ENCODE measurements at regions of chr20 and their contacts with region 1.

Region 1: GRCh38 chr20:45771182-45771759 is 20.4 kb downstream of the WFDC3 start:
- DNase-seq: peak; percentile 73 to 79 (median 75)
- H3K4me3 ChIP-seq: no peak overlapping the region
- H3K4me3 Mint-ChIP-seq: peak overlapping the region in 1 of 8 donors; percentile 21
- H3K27ac ChIP-seq: no peak overlapping the region
- H3K27ac Mint-ChIP-seq: peak overlapping the region in 1 of 7 donors; percentile 61
- H3K4me1 ChIP-seq: no peaks in the 10 kb centered on the region
- H3K4me1 Mint-ChIP-seq: peaks cover 1 to 7% (median 4%) of the 10 kb centered on the region in 4 donors
- H3K27me3 ChIP-seq: no peaks in the 10 kb centered on the region
- H3K27me3 Mint-ChIP-seq: peaks cover 10 to 23% of the 10 kb centered on the region in 2 donors

Region 2: DNA sequence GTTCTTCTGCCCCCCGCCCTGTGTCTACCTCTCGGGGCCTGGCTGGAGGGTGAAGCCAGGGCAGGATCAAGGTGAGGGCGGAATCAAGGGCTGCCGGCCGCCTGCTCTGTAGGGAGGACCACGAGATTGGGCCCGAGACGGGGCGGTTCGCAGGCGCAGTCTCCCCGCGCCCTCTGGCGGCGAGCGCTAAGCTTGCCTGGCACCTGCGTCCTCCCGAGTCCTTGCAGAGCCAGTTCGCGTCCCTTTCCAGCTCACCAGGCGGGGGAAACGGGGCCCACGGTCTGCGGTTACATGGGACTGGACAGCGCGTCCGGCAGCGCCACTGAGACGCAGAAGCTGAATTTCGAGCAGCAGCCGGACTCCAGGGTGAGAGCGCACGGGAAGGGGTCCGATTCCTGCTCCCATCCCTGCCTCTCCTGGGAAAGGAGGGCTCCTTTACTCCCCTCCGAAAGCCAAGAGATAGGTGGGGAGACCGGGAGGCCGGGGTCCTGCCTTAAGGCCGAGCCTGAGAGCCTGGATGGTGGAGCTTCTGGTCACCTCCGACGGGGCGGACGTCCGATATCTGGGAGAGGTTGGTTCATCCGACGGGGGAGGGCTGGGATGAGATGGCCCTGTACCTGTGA is 459.6 kb before region 1 on chr20:
- CTCF ChIA-PET with region 1: interaction called, 125 read pairs
- POLR2A ChIA-PET with region 1: no interaction called
- intact Hi-C with region 1: no loop called
- DNase-seq: peak in 4 of 5 donors; percentile 33 to 49 (median 40)
- H3K4me3 ChIP-seq: no peak overlapping the region
- H3K4me3 Mint-ChIP-seq: peak overlapping the region in 1 of 8 donors; percentile 4
- H3K27ac ChIP-seq: no peak overlapping the region
- H3K27ac Mint-ChIP-seq: no peak overlapping the region
- H3K4me1 ChIP-seq: peaks cover 6% of the 10 kb centered on the region
- H3K4me1 Mint-ChIP-seq: peaks cover 4 to 7% (median 6%) of the 10 kb centered on the region in 4 donors
- H3K27me3 ChIP-seq: no peaks in the 10 kb centered on the region
- H3K27me3 Mint-ChIP-seq: peaks cover 21 to 35% of the 10 kb centered on the region in 2 donors

Region 3: DNA sequence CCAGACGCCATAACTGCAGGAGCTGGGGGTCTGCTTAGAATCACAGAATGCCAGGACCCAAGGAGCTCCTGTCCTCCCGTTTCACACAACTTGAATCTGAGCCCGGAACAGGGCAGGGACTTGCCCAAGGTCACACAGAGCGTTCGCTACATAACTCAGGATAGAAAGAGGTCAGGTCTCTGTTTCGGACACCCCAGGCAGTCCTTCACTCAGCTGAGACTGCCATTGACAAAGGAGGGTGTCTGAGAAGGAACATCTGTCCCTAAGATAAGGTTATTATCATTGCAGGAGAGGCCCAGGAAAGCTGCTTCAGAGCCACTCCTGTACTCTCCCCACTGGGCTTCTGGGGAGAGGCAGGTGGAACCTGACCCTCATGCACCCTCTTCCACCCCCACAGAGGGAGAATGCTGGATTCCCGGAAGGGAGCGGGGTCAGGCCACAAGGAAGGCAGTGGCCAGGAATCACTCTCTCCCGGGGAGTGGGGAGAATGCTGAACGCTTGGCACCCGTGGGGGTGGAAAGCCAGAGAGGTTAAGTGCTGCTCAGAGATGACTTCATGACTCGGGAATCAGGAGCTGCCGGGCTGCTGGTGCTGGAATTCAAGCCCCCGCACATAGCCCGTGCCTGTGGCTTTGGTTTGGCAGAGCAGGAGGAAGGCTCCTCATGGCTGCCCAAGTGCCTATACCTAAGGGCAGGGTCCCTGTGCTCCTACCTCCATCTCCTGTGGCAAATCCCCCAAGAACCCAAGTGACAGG is 433.7 kb before region 1 on chr20:
- CTCF ChIA-PET with region 1: interaction called, 11 read pairs
- POLR2A ChIA-PET with region 1: no interaction called
- intact Hi-C with region 1: no loop called
- DNase-seq: no peak
- H3K4me3 ChIP-seq: no peak overlapping the region
- H3K4me3 Mint-ChIP-seq: no peak overlapping the region
- H3K27ac ChIP-seq: no peak overlapping the region
- H3K27ac Mint-ChIP-seq: peak overlapping the region in 1 of 7 donors; percentile 36
- H3K4me1 ChIP-seq: no peaks in the 10 kb centered on the region
- H3K4me1 Mint-ChIP-seq: no peaks in the 10 kb centered on the region
- H3K27me3 ChIP-seq: no peaks in the 10 kb centered on the region
- H3K27me3 Mint-ChIP-seq: no peaks in the 10 kb centered on the region

Region 4: GRCh38 chr20:45456632-45457031 is 314.6 kb before region 1 on chr20:
- CTCF ChIA-PET with region 1: interaction called, 9 read pairs
- POLR2A ChIA-PET with region 1: no interaction called
- intact Hi-C with region 1: loop called (anchors 1 kb)
- DNase-seq: peak in 1 of 5 donors; percentile 19
- H3K4me3 ChIP-seq: no peak overlapping the region
- H3K4me3 Mint-ChIP-seq: no peak overlapping the region
- H3K27ac ChIP-seq: no peak overlapping the region
- H3K27ac Mint-ChIP-seq: peak overlapping the region in 1 of 7 donors; percentile 11
- H3K4me1 ChIP-seq: no peaks in the 10 kb centered on the region
- H3K4me1 Mint-ChIP-seq: no peaks in the 10 kb centered on the region
- H3K27me3 ChIP-seq: no peaks in the 10 kb centered on the region
- H3K27me3 Mint-ChIP-seq: no peaks in the 10 kb centered on the region

Region 5: DNA sequence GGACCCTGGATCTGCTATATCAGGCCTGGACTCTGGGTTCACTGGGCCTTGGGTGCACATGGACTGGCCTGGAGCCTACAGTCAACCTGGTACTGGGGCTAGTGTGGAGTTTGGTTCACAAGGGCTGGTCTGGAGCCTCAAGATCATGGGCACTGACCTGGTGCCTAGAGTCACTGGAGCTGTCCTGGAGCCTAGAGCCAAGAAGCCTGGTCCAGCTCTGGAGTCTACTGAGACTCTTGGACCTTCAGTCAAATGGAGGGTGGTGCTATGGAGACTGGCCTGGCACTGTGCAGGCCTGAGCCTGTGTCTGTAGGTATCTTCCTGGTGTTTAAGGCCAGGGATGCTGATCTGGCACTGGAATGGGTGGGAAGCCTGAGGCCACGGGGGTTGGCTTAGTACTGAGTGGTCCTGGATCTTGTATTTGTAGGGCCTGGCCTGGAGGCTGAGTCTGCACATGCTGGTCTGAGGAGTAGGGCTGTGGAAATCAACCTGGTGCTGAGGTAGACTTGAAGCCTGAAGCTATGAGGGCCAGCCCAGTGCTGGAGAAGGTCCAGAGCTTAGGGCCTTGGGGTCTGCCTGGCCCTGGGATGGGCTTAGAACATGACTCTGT is 123.7 kb before region 1 on chr20:
- CTCF ChIA-PET with region 1: no interaction called
- POLR2A ChIA-PET with region 1: no interaction called
- intact Hi-C with region 1: no loop called
- DNase-seq: no peak
- H3K4me3 ChIP-seq: no peak overlapping the region
- H3K4me3 Mint-ChIP-seq: no peak overlapping the region
- H3K27ac ChIP-seq: no peak overlapping the region
- H3K27ac Mint-ChIP-seq: no peak overlapping the region
- H3K4me1 ChIP-seq: no peaks in the 10 kb centered on the region
- H3K4me1 Mint-ChIP-seq: no peaks in the 10 kb centered on the region
- H3K27me3 ChIP-seq: no peaks in the 10 kb centered on the region
- H3K27me3 Mint-ChIP-seq: peaks cover 1 to 13% of the 10 kb centered on the region in 2 donors

Region 6: GRCh38 chr20:45798935-45799642 is 27.8 kb after region 1 on chr20:
- CTCF ChIA-PET with region 1: interaction called, 11 read pairs
- POLR2A ChIA-PET with region 1: no interaction called
- intact Hi-C with region 1: no loop called
- DNase-seq: peak; percentile 56 to 62 (median 60)
- H3K4me3 ChIP-seq: no peak overlapping the region
- H3K4me3 Mint-ChIP-seq: no peak overlapping the region
- H3K27ac ChIP-seq: no peak overlapping the region
- H3K27ac Mint-ChIP-seq: peak overlapping the region in 6 of 7 donors; percentile 3 to 89 (median 46)
- H3K4me1 ChIP-seq: peaks cover 7% of the 10 kb centered on the region
- H3K4me1 Mint-ChIP-seq: peaks cover 4 to 11% (median 8%) of the 10 kb centered on the region in 4 donors
- H3K27me3 ChIP-seq: no peaks in the 10 kb centered on the region
- H3K27me3 Mint-ChIP-seq: no peaks in the 10 kb centered on the region

Measured in CD4-positive, alpha-beta memory T cell (primary cell).